ENCODE measurements at regions of chr20 and their contacts with region 1.

Region 1: DNA sequence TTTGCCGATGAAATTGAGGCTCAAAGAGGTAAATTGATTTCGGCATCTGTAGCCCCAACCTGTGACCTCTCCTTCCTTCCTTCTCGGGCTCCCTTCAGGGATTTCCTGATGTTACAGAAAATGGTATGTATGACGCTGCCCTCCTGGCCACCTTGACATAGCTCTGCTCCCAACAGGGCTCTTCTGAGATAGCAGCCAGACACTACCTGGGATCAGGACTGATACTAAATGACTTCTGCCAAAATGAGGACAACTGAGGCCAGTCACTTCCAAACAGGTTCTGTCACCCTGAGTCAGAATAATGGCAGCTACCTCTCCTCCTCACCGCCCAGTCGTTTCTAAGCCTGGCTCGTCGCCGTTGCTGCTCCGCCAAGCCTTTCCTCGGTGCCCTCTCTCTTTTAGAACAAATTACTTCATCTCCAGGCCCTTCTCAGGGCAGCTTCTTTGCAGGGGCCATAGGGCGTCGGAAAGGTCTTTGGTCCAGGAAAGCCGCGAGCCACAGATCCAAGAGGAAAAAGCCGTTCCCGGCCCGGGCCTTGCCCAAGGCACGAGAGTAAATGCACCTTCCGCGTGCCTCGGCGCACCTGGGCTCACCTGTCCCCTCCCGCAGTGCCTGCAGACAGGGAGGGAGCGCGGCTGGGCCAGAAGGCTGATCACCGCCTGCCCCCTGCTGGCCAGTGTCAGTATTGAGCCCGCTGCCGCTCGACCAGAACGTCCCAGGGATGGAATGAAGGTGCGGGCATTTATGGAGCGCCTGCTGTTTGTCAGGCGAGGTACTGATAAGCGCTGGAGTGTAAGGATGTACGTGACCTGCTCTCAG is 904 bp upstream of the LPIN3 start:
- DNase-seq: peak; percentile 78 to 89 (median 86)
- ATAC-seq: peak; percentile 85
- H3K4me3 ChIP-seq: peak overlapping the region; percentile 44
- H3K27ac ChIP-seq: no peak overlapping the region
- H3K4me1 ChIP-seq: peaks cover 8 to 28% of the 10 kb centered on the region in 2 experiments; a peak in 4 of 5 replicates
- H3K27me3 ChIP-seq: peaks cover 2 to 9% of the 10 kb centered on the region in 2 experiments; a peak in 3 of 5 replicates
- CTCF ChIP-seq: peak; percentile 94 to 95 (median 95)
- EP300 ChIP-seq: no peak
- POLR2A ChIP-seq: no peak
- RAD21 ChIP-seq: peak; percentile 97 to 98

Region 2: DNA sequence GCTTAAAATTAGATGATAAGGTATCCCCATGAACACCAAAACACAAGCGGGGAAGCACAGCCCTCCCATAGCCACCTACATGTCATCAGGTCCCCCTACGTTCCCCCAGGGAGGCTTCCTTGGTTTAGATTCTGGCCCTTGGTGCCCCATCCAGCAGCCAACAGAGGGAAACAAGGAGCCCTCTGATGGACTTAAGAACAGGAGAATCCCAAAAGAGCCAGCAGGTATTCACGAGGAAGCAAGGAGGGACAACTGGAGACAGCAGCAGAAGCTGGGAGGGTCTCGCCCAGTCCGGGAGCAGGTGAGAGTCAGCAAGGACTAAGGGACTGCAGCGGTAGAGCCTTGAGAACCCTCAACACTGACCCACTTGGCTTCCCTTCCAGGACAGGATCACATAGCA is 369.5 kb before region 1 on chr20:
- CTCF ChIA-PET with region 1: interaction called, 29 read pairs
- POLR2A ChIA-PET with region 1: no interaction called
- in situ Hi-C with region 1: loop called (anchors 5 kb)
- intact Hi-C with region 1: loop called (anchors 1 kb)
- DNase-seq: no peak
- ATAC-seq: no peak
- H3K4me3 ChIP-seq: no peak overlapping the region
- H3K27ac ChIP-seq: no peak overlapping the region
- H3K4me1 ChIP-seq: peaks cover 0 to 4% of the 10 kb centered on the region in 2 experiments; a peak in 1 of 5 replicates
- H3K27me3 ChIP-seq: no peaks in the 10 kb centered on the region; a peak in 2 of 5 replicates
- CTCF ChIP-seq: peak in 1 of 3 experiments; percentile 15; a peak in 1 of 6 replicates
- EP300 ChIP-seq: no peak
- POLR2A ChIP-seq: no peak
- RAD21 ChIP-seq: peak in 1 of 2 experiments; percentile 41; a peak in 1 of 4 replicates

Region 3: DNA sequence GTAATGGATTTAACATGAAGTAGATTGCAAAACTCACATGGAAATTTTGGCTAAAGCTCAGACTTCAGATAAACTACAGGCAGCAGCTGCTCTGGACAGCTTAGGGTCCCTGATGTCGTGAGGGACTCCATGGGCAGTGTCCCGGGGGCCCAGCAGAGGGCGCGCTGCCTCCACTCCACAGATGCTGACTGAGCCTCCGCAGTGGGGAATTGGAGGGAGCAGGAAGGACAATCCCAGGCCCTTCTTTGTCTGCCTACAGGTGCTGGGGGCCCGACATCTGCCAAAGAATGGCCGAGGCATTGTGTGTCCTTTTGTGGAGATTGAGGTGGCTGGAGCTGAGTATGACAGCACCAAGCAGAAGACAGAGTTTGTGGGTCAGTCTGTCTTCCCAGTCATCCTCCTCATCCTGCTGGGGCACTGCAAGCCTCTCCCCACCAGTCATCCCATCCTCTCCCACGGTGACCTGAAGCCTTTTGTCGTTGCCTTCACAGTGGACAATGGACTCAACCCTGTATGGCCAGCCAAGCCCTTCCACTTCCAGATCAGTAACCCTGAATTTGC is 166.5 kb before region 1 on chr20:
- CTCF ChIA-PET with region 1: interaction called, 50 read pairs
- POLR2A ChIA-PET with region 1: no interaction called
- in situ Hi-C with region 1: loop called (anchors 5 kb)
- intact Hi-C with region 1: loop called (anchors 1 kb)
- DNase-seq: peak; percentile 78 to 82 (median 79)
- ATAC-seq: peak; percentile 98
- H3K4me3 ChIP-seq: no peak overlapping the region
- H3K27ac ChIP-seq: no peak overlapping the region
- H3K4me1 ChIP-seq: no peaks in the 10 kb centered on the region
- H3K27me3 ChIP-seq: no peaks in the 10 kb centered on the region
- CTCF ChIP-seq: peak; percentile 89 to 95 (median 93)
- EP300 ChIP-seq: no peak
- POLR2A ChIP-seq: no peak
- RAD21 ChIP-seq: peak; percentile 87 to 91

Region 4: DNA sequence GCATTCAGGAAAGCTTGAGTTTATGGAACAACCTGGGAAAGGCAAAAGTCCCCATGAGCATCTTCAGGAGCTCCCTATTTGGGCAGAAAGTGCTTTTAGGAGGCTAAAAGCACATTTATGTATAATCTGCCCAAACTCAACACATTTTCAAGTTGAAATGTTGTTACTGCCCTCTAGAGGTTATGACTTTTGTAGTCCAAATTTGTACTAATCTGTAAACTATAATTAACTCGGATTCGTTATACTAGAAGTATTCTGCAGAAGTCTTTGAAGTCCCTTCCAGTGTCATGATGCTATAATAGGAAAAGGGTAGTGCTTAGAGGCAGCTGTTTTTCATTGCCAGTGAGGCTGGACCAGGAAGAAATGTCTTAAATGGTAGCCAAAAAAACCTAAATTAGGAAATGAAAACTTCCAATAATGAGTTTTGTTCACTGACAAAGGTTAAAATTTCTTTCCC is 71.7 kb after region 1 on chr20:
- CTCF ChIA-PET with region 1: no interaction called
- POLR2A ChIA-PET with region 1: no interaction called
- in situ Hi-C with region 1: no loop called
- intact Hi-C with region 1: loop called (anchors 1 kb)
- DNase-seq: peak in 1 of 4 experiments; percentile 14
- ATAC-seq: peak; percentile 51; the same call in 1 of the 3 replicates
- H3K4me3 ChIP-seq: no peak overlapping the region
- H3K27ac ChIP-seq: no peak overlapping the region
- H3K4me1 ChIP-seq: peaks cover 0 to 4% of the 10 kb centered on the region in 2 experiments; a peak in 3 of 5 replicates
- H3K27me3 ChIP-seq: no peaks in the 10 kb centered on the region
- CTCF ChIP-seq: peak in 2 of 3 experiments; percentile 48 to 53; a peak in 4 of 6 replicates
- EP300 ChIP-seq: no peak
- POLR2A ChIP-seq: no peak
- RAD21 ChIP-seq: peak in 1 of 2 experiments; percentile 41; a peak in 1 of 4 replicates

Region 5: GRCh38 chr20:41693136-41693979 is 353.6 kb after region 1 on chr20:
- CTCF ChIA-PET with region 1: no interaction called
- POLR2A ChIA-PET with region 1: interaction called, 5 read pairs
- in situ Hi-C with region 1: no loop called
- intact Hi-C with region 1: loop called (anchors 5 kb)
- DNase-seq: peak; percentile 64 to 90 (median 66)
- ATAC-seq: peak; percentile 77
- H3K4me3 ChIP-seq: peak overlapping the region; percentile 59
- H3K27ac ChIP-seq: peak overlapping the region; percentile 93
- H3K4me1 ChIP-seq: peaks cover 29 to 59% of the 10 kb centered on the region in 2 experiments
- H3K27me3 ChIP-seq: no peaks in the 10 kb centered on the region
- CTCF ChIP-seq: peak in 2 of 3 experiments; percentile 27 to 70; a peak in 4 of 6 replicates
- EP300 ChIP-seq: 0 out of 2 replicates have a peak, but pooled peaks have one; percentile 14
- POLR2A ChIP-seq: peak; percentile 82
- RAD21 ChIP-seq: peak in 1 of 2 experiments; percentile 5; a peak in 1 of 4 replicates